Gastrocnemius medialis (tissue), 4 donors: ENCODE measurements at regions of chr6 and their contacts with region 1.

Region 1: DNA sequence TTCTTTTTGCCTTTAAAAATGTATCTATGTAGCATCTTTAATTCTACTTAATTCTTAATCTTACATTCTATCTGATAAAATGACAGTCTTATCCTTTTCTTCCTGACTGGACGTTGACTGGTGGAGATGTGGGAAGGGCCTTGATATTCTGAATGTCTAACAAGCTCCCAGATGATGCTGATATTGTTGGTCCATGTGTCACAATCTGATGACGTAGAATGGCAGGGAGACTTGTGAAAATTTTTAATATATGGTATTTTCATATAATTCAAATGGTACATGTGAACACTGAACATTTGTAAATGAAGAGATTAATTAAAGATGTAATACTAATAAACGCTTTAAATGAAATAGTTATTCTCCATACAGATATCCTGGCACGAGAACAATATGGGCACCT is 416.9 kb downstream of the HTR1B start:
- DNase-seq: no peak
- ATAC-seq: no peak
- H3K4me3 ChIP-seq: no peak overlapping the region
- H3K27ac ChIP-seq: no peak overlapping the region
- H3K4me1 ChIP-seq: no peaks in the 10 kb centered on the region
- H3K27me3 ChIP-seq: no peaks in the 10 kb centered on the region
- CTCF ChIP-seq: no peak
- POLR2A ChIP-seq: no peak

Region 2: GRCh38 chr6:76992553-76992952 is 53.8 kb before region 1 on chr6:
- in situ Hi-C with region 1: no loop called
- intact Hi-C with region 1: loop called (anchors 2 kb)
- DNase-seq: no peak
- ATAC-seq: no peak
- H3K4me3 ChIP-seq: no peak overlapping the region
- H3K27ac ChIP-seq: no peak overlapping the region
- H3K4me1 ChIP-seq: no peaks in the 10 kb centered on the region
- H3K27me3 ChIP-seq: no peaks in the 10 kb centered on the region
- CTCF ChIP-seq: no peak
- POLR2A ChIP-seq: no peak